Activated T-helper 2 cell treated with anti-CD3 and anti-CD28 coated beads, Interferon-gamma antibody, Interleukin-2, Interleukin-4, amounts not matched to agents 10 μg/mL and 5 μg/mL and 100 μg/mL, durations not matched to agents 14 hours and 24 hours and 36 hours (primary cell): ENCODE measurements at regions of chr6 and their contacts with region 1.

Region 1: DNA sequence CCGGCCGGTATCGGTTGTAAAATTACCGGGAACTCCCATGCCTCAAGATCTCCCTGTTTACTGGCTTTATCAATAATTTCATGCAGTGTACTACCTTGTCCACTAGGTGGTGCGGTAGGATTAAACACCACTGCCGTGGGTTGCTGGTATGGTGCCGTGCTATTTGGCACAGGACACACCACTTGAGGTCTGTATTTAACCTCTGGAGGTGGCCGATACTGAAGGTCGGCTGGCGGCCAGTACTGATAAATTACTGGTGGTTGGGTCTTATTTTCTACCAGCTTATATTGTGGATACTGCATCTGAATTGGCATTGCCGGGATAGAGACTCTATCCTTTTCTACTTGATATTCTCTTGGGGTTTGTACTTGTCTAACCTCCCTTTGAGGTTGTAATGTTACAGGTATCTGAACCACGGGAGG is 14.3 kb upstream of the PTCRA start:
- DNase-seq: peak; percentile 61
- H3K4me3 Mint-ChIP-seq: no peak overlapping the region
- H3K27ac Mint-ChIP-seq: no peak overlapping the region
- H3K4me1 Mint-ChIP-seq: peaks cover 19% of the 10 kb centered on the region
- H3K27me3 Mint-ChIP-seq: no peaks in the 10 kb centered on the region

Region 2: DNA sequence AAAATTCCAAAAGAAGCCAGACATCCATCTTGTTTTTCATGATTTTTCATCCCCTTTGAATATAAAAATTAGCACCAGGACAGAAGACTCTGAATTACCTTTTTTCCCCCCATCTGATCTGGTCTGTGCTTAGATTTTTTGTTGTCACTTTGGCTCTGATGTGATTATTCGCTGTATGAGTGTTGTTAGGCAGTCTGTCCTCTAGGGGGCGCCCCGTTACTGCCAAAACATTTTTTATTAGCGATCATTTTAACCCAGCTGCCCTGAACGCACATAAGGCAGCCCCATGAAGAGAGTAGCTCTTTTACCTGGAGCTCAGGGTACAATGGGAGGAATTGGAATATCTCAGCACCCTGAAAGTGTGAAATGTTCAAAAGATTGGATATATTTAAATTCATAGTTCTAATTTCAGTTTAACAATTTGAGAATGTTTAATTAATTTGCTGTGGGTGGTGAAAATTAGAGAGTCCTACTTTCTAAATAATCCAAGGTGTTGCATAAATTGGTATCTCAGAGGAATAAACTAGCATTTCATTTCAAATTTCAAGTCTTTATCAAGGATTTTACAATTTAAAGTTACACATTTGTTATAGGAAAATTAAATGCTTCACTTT is 239.9 kb before region 1 on chr6:
- intact Hi-C with region 1: loop called (anchors 2 kb)
- DNase-seq: peak; percentile 74
- H3K4me3 Mint-ChIP-seq: no peak overlapping the region
- H3K27ac Mint-ChIP-seq: no peak overlapping the region
- H3K4me1 Mint-ChIP-seq: peaks cover 3% of the 10 kb centered on the region
- H3K27me3 Mint-ChIP-seq: no peaks in the 10 kb centered on the region

Region 3: DNA sequence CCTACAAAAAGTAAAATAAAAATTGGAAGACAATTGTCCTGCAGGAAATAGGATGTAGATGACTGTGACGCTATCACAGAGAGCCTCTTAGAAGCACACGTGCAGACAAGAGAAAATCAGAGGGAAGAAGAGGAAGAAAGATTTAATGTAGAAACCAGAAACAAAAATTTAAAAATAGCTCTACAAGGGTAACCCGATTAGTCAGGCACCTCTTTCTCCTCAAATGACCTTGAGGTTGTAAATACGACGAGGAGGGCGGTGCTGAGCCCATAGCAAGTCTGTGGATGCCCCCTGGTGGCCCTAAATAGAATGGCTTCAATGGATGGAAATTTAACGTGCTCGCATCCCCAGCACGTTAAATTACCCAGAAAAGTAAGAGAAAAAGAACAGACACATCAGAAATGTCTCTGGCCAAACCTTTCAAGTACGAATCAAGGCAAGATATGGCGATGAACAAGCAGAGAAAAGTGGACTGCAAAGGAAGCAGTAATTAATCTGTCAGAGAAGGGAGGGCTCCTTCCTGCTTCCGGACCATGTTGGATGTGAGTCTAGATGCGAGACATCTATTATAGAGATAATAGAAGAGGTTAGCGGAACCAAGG is 175.0 kb before region 1 on chr6:
- intact Hi-C with region 1: loop called (anchors 2 kb)
- DNase-seq: peak; percentile 61
- H3K4me3 Mint-ChIP-seq: peak overlapping the region; percentile 81
- H3K27ac Mint-ChIP-seq: peak overlapping the region; percentile 98
- H3K4me1 Mint-ChIP-seq: peaks cover 19% of the 10 kb centered on the region
- H3K27me3 Mint-ChIP-seq: peaks cover 6% of the 10 kb centered on the region

Region 4: GRCh38 chr6:42970871-42971612 is 69.5 kb after region 1 on chr6:
- intact Hi-C with region 1: no loop called
- DNase-seq: no peak
- H3K4me3 Mint-ChIP-seq: no peak overlapping the region
- H3K27ac Mint-ChIP-seq: peak overlapping the region; percentile 12
- H3K4me1 Mint-ChIP-seq: peaks cover 10% of the 10 kb centered on the region
- H3K27me3 Mint-ChIP-seq: no peaks in the 10 kb centered on the region

Region 5: GRCh38 chr6:43021270-43022047 is 119.9 kb after region 1 on chr6 and contains the start of gene RRP36:
- intact Hi-C with region 1: loop called (anchors 5 kb)
- DNase-seq: peak; percentile 58
- H3K4me3 Mint-ChIP-seq: peak within 1 kb of the TSS; percentile 97
- H3K27ac Mint-ChIP-seq: peak within 1 kb of the TSS; percentile 88
- H3K4me1 Mint-ChIP-seq: peaks cover 20% of the 10 kb centered on the region
- H3K27me3 Mint-ChIP-seq: no peaks in the 10 kb centered on the region
- total RNA-seq, gene RRP36: 71.4 and 78.4 TPM in 2 replicates

Region 6: GRCh38 chr6:43143235-43144124 is 241.9 kb after region 1 on chr6:
- intact Hi-C with region 1: loop called (anchors 1 kb)
- DNase-seq: peak; percentile 70
- H3K4me3 Mint-ChIP-seq: no peak overlapping the region
- H3K27ac Mint-ChIP-seq: peak overlapping the region; percentile 25
- H3K4me1 Mint-ChIP-seq: peaks cover 8% of the 10 kb centered on the region
- H3K27me3 Mint-ChIP-seq: no peaks in the 10 kb centered on the region